ENCODE measurements at regions of chr1 and their contacts with region 1.

Region 1: DNA sequence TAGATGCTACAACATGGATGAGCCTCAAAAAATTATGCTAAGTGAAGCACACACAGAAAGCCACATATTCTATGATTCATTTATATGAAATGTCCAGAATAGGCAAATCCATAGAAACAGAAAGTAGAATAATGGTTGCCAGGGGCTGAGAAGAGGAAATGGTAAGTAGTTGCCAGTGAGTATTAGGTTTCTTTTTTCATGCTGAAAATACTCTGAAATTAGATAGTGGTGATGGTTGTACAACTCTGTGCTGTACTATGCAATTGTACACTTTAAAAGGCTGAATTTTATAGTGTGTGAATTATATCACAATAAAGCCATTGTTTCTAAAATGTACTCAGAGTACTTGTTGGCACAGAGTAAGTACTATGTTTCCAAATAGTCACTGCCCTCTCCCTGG is 15.5 kb upstream of the GFI1 start:
- DNase-seq: no peak
- H3K4me3 Mint-ChIP-seq: no peak overlapping the region
- H3K27ac Mint-ChIP-seq: peak overlapping the region; percentile 46
- H3K4me1 Mint-ChIP-seq: peaks cover 35% of the 10 kb centered on the region
- H3K27me3 Mint-ChIP-seq: no peaks in the 10 kb centered on the region

Region 2: DNA sequence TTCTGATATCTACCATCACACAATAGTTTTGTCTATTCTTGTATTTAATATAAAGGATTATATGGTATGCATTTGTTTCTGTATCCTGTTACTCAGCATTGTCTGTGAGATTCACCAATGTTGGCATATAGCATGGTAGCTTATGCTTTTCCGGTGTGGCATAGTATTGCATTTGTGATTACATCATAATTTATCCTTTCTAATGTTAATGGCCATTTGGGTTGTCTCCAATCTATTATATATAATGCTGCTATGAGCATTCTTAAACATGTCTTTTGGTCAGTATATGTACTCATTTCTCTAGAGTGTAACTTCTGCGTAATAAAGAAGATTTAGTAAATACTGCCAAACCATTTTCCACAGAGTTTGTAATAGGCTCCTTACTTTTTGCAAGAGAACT is 25.4 kb after region 1 on chr1:
- CTCF ChIA-PET with region 1: interaction called, 5 read pairs
- intact Hi-C with region 1: loop called (anchors 1 kb)
- DNase-seq: no peak
- H3K4me3 Mint-ChIP-seq: no peak overlapping the region
- H3K27ac Mint-ChIP-seq: no peak overlapping the region
- H3K4me1 Mint-ChIP-seq: peaks cover 23% of the 10 kb centered on the region
- H3K27me3 Mint-ChIP-seq: no peaks in the 10 kb centered on the region

Measured in activated naive CD4-positive, alpha-beta T cell treated with anti-CD3 and anti-CD28 coated beads for 36 hours (primary cell).